Ascending aorta (tissue), 2 donors: ENCODE measurements at regions of chr6 and their contacts with region 1.

Region 1: GRCh38 chr6:147202516-147203312 is 1.5 kb upstream of the STXBP5 start:
- DNase-seq: peak; percentile 74 to 93
- H3K4me3 ChIP-seq: peak overlapping the region; percentile 98
- H3K27ac ChIP-seq: peak overlapping the region; percentile 98 to 99
- H3K4me1 ChIP-seq: no peaks in the 10 kb centered on the region
- H3K27me3 ChIP-seq: no peaks in the 10 kb centered on the region
- CTCF ChIP-seq: no peak

Region 2: DNA sequence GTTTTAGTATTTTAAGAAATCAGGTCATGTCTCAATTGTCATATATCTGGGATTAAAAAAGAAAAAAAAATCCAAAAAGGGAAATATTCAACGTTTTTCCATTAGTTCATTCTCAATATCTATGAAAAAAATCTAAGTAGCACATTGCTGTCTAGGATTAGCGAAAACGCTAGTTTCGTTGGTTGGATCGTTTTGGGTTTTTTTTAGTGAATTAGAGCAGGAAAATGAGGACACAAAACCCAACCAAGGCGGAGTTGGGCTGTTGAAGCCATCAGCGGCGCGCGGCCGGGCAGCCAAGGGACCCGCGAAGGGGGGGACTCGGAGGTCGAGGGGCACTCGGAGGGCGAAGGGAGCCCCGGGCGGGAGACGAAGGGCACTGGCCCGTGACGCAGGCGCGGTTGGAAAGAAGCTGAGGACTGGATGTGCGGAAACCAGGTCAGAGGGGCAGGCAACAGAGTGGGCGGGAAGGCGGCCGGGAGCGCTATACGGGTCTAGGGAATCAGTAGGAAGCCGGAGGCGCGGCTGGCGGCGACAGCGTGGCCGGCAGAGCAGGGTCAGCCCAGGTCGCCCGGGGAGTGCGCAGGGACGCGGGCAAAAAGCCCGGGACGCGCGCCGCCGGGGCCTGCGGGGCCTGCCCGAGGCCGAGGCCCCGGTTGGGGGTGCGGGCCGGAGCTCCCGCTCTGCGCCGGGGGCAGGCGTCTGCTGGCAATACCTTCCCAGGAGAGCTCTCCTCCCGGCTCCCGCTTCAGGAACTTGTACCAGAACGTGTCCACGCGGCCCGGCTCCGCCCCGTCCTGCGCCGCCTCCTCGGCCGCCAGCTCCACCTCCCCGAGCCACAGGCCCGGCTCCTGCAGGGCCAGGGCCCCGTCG is 1468.0 kb before region 1 on chr6:
- intact Hi-C with region 1: loop called (anchors 5 kb)
- DNase-seq: peak; percentile 65 to 94
- H3K4me3 ChIP-seq: peak overlapping the region; percentile 59 to 82
- H3K27ac ChIP-seq: peak overlapping the region; percentile 96 to 97
- H3K4me1 ChIP-seq: peaks cover 0 to 8% of the 10 kb centered on the region in 2 donors
- H3K27me3 ChIP-seq: no peaks in the 10 kb centered on the region
- CTCF ChIP-seq: no peak

Region 3: GRCh38 chr6:145814501-145815308 is 1388.0 kb before region 1 on chr6 and contains the start of gene FBXO30:
- intact Hi-C with region 1: loop called (anchors 10 kb)
- DNase-seq: peak; percentile 53 to 96
- H3K4me3 ChIP-seq: peak within 1 kb of the TSS; percentile 77 to 95
- H3K27ac ChIP-seq: peak within 1 kb of the TSS; percentile 92 to 94
- H3K4me1 ChIP-seq: peaks cover 0 to 32% of the 10 kb centered on the region in 2 donors
- H3K27me3 ChIP-seq: no peaks in the 10 kb centered on the region
- CTCF ChIP-seq: peak in 1 of 3 experiments; percentile 42
- total RNA-seq, gene FBXO30: 1.2 TPM

Region 4: DNA sequence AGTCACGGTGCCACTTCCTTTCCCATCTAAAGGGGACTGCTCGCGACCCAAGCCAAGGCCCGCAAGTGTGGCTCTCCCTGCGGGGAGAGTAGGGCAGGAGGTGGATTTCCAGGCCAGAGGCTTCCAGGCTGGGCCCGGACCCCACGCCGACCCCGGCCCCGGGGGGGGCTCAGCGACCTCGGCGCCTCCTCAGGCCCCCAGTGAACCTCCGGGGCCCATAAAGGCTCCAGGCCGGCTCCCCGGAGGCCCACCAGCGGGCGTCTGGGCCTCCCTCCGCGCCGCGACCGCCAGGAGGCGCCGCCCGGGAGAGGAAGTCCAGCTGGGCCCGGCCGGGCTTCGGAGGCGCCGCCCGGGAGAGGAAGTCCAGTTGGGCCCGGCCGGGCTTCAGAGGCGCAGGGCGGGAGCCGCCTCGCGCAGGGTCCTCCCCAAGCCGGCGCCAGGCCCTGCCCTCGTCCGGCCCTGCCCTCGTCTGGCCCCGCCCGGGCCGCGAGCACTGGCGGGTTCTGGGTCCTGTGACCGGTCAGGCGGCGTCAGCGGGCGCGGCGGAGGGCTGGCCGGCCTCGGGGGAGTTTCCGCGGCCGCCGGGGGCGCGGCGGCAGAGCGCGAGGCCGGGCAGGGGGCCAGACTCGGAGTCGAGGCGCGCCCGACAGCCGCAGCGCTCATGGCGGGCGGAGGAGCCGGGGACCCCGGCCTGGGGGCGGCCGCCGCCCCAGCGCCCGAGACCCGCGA is 659.3 kb before region 1 on chr6 and contains the start of gene RAB32:
- intact Hi-C with region 1: loop called (anchors 2 kb)
- DNase-seq: peak; percentile 82 to 97
- H3K4me3 ChIP-seq: peak within 1 kb of the TSS; percentile 91 to 94
- H3K27ac ChIP-seq: peak within 1 kb of the TSS; percentile 97 to 99
- H3K4me1 ChIP-seq: peaks cover 4 to 27% of the 10 kb centered on the region in 2 donors
- H3K27me3 ChIP-seq: no peaks in the 10 kb centered on the region
- CTCF ChIP-seq: peak; percentile 79 to 85 (median 79)
- total RNA-seq, gene RAB32: 89.2 TPM

Region 5: GRCh38 chr6:146719387-146719786 is 483.3 kb before region 1 on chr6:
- intact Hi-C with region 1: no loop called
- DNase-seq: no peak
- H3K4me3 ChIP-seq: no peak overlapping the region
- H3K27ac ChIP-seq: no peak overlapping the region
- H3K4me1 ChIP-seq: no peaks in the 10 kb centered on the region
- H3K27me3 ChIP-seq: no peaks in the 10 kb centered on the region
- CTCF ChIP-seq: no peak

Region 6: GRCh38 chr6:146857180-146857979 is 345.3 kb before region 1 on chr6:
- intact Hi-C with region 1: loop called (anchors 5 kb)
- DNase-seq: peak; percentile 28 to 93
- H3K4me3 ChIP-seq: peak overlapping the region; percentile 43 to 62
- H3K27ac ChIP-seq: peak overlapping the region; percentile 57 to 77
- H3K4me1 ChIP-seq: peaks cover 0 to 4% of the 10 kb centered on the region in 2 donors
- H3K27me3 ChIP-seq: no peaks in the 10 kb centered on the region
- CTCF ChIP-seq: peak in 2 of 3 experiments; percentile 95 to 98

Region 7: DNA sequence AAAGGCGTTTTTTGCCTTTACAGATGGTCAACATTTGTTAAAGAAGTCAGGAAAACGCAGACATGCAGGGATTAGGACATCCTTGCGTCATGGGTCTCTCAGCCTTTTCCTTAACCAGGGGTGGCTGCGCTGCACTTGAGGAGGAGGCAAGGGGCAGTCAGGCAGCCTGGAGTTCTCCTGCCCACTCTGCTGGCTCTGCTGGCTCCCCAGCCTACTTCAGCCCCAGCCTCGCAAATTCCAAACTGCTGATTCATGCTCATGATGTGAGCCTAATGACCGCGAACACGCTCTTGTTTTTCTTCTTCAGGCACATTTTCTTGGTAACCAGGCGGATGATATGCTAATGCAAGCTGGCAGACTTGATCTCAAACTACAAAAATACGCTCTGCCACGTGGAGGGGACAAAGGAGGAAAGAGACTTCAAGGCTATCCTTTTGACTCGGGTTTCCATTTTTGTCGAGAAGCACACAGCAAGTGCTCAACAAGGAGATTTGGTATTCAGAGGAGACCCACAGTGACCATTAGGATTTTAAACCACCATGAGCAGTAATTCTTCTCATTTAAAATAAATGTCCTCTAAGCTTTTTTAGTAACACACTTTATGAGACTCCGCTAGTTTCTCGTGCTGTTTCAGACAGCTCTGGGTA is 288.7 kb before region 1 on chr6:
- intact Hi-C with region 1: loop called (anchors 2 kb)
- DNase-seq: peak; percentile 31 to 88
- H3K4me3 ChIP-seq: peak overlapping the region; percentile 43 to 44
- H3K27ac ChIP-seq: peak overlapping the region; percentile 64 to 75
- H3K4me1 ChIP-seq: peaks cover 0 to 10% of the 10 kb centered on the region in 2 donors
- H3K27me3 ChIP-seq: no peaks in the 10 kb centered on the region
- CTCF ChIP-seq: no peak

Region 8: DNA sequence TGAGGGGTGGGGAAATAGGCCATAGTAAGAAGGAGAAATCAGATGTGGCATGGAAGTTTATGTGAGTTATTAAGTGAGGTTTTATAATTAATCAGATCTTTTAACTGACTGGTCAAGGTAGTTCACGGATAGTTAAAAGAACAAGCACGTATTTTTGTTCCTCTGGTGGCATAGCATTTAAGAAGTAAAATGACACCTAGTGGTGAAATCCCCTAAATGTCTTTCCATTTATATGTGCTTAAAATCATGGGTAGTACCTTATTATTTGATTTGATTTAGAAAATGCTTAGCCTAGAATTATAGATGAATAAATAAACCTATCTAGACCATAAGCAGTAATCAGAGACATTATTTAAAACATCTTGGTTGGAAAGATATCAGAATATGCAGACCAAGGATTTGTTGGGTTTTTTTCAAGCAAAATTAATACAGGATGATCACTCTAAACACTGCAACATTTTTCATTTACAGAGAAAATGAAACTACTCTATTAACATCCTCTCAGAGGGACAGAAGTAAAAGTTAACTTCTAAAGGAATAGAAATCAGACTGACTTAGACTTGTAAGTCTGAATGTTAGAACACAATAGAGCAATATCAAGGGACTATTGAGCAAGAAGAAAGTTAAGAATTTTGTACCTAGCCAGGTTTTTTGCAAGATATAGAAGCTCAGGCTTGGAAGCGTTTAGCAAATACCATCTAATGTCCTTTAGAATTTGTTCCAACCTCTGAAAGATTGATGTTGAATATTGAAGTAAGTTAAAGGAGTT is 82.6 kb after region 1 on chr6:
- intact Hi-C with region 1: loop called (anchors 5 kb)
- DNase-seq: no peak
- H3K4me3 ChIP-seq: no peak overlapping the region
- H3K27ac ChIP-seq: no peak overlapping the region
- H3K4me1 ChIP-seq: no peaks in the 10 kb centered on the region
- H3K27me3 ChIP-seq: no peaks in the 10 kb centered on the region
- CTCF ChIP-seq: peak; percentile 20 to 54 (median 42)

Region 9: DNA sequence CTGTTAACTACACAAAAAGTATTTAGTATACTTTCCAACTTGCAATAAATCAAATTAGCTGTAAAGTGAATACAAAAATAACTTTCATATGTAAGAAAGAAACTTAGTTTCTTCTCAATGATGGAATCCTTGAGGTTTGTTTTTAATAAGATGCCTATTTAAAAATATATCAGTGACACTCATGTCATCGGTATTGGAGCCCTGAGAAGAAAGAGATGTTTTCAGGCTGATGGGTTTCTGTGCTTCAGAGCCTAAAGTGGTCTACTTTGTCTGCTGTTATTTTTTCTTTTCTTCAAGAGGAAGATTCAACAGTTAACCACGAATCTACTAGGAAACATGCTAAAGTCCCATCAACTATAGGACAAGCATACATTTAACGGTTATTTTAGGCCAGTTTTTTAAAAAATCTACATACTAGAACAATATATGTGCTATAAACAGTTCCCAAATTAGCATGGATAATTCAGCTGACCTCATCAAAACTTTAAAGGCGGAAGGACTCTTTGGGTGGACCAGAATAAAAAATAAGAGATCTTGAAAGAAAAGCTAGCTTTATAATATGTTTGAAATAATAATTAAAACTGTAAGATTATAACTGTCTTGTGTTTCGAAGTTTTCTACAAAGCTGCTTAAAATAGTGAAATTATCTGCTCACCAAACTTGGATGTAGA is 158.7 kb after region 1 on chr6:
- intact Hi-C with region 1: no loop called
- DNase-seq: no peak
- H3K4me3 ChIP-seq: no peak overlapping the region
- H3K27ac ChIP-seq: no peak overlapping the region
- H3K4me1 ChIP-seq: no peaks in the 10 kb centered on the region
- H3K27me3 ChIP-seq: no peaks in the 10 kb centered on the region
- CTCF ChIP-seq: no peak